ENCODE measurements at regions of chr6 and their contacts with region 1.

Region 1: DNA sequence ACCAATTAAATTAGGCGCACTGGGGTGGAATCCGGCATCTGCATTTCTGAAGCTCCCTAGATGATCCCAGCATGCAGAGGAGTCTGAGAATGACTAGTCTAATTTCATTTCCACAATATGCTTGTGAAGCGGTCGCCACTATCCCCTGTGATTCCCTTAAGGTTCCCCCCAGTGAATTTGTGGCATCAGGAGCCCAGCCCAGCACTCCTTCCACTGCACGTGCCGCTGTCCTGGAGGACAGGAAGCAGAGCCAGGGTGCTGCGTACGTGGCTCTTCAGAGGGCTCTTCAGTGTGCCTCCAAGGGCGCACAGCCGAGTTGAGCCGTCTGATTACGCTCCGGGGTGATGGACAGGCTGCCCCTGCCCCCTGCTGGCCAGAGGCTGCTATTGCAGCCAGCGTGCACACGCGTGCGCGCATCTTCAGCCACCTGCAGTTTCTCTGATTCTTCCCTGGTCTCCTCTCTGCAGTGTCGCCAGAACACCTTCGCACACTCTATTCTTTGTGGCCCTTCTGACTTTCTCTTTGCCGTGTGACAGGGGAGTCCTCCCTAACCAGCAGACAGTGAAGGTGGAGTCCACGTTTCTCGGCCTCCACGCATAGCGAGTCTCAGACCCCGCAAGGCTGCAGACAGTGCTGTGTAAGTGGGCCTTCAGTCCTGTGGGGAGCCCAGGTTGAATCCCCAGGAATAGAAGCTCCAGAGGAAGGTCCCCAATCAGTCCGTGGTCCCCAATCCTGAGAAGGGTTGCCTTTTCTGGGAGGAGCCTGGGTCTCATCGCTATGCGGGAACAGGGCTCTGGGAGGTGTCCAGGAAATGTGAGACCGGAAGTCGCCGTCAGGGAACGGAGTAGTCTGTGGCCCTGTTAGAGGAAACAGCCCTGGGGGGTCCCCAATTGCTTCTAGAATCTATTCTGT is 16.5 kb upstream of the NCR2 start:
- DNase-seq: peak; percentile 17
- H3K4me3 ChIP-seq: peak overlapping the region; percentile 51
- CTCF ChIP-seq: peak; percentile 99

Region 2: GRCh38 chr6:41092421-41093140 is 226.3 kb before region 1 on chr6:
- CTCF ChIA-PET with region 1: interaction called, 63 read pairs
- POLR2A ChIA-PET with region 1: no interaction called
- DNase-seq: no peak
- H3K4me3 ChIP-seq: no peak overlapping the region
- CTCF ChIP-seq: peak; percentile 43

Region 3: DNA sequence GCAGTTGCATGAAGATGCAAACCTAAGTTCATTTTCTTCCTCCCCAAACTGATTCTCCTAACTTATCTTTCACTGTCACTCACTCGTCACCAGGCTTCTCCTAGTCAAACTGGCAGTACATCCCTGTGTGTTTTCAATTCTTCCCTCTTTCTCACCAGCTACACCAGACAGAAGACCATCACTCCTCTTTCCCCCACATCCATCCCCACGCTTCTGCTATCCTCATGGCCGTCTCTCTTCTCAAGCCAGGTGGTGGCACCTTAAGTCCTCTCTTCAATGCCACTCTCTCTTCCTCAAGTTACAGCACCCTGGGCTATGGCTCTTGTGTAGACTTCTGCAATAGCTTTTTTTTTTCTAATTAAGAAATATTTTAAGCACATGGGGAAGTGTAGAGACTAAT is 141.6 kb before region 1 on chr6:
- CTCF ChIA-PET with region 1: no interaction called
- POLR2A ChIA-PET with region 1: no interaction called
- DNase-seq: no peak
- H3K4me3 ChIP-seq: no peak overlapping the region
- CTCF ChIP-seq: no peak

Region 4: GRCh38 chr6:41306187-41306854 is 12.6 kb before region 1 on chr6:
- CTCF ChIA-PET with region 1: interaction called, 167 read pairs
- POLR2A ChIA-PET with region 1: no interaction called
- DNase-seq: no peak
- H3K4me3 ChIP-seq: no peak overlapping the region
- CTCF ChIP-seq: peak; percentile 42

Region 5: DNA sequence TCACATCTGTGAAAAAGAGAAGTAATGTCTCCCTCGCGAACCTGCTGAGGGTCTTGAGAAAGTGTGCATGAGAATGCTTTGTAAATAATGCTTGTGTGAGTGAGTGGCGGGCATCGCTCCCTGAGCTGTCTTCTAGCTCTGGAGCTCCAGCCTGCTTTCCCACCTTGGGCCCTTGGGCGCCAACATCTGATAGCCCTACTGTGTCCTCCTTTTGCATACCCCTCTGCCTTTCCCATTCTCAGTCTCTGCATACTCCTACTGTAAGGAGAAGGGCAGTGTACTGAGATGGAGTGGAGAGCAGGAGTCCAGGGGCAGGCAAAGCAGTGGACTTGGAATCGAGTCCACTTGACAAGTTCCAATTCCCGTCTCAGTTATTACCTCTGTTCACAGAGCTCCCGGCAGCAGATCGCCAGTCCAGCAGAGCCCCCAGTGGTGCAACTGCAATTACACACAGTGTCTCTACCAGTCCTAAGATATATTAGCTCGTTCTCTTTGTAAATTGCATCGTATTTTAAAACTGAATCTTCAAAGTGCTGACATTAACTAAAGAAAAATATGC is 15.7 kb after region 1 on chr6:
- CTCF ChIA-PET with region 1: interaction called, 13 read pairs
- POLR2A ChIA-PET with region 1: interaction called, 5 read pairs
- DNase-seq: no peak
- H3K4me3 ChIP-seq: no peak overlapping the region
- CTCF ChIP-seq: no peak

Measured in AG04449 (cell line).